ENCODE measurements at regions of chr14 and their contacts with region 1.

Region 1: DNA sequence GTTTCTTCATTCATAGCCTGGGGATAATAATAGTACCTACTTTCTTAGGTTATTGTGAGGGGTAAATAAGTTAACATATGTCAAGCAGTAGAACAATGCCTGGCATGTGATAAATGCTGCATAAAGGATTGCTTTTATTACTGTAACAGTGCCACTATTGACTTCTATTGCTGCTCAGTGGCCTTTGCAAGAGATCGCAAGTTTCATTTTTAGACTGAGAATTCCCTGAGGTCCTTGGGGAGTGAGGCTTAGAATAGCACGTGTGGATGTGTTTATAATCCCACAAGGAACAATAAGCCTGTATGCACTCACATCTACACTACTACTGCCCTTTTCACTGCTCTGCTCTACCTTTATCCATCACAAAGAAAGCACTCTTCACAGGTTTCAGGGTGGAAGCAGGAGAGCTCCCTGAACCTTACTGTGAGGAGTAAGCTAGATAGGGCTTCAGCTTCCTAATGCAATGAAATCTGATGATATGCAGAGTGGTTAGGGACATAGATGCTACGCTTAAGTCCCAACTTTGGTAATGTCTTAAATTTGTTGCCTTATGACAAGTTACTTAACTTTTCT is 302.6 kb downstream of the SNAPC1 start:
- DNase-seq: no peak
- ATAC-seq: no peak
- H3K4me3 ChIP-seq: no peak overlapping the region
- H3K27ac ChIP-seq: no peak overlapping the region
- H3K4me1 ChIP-seq: no peaks in the 10 kb centered on the region
- H3K27me3 ChIP-seq: no peaks in the 10 kb centered on the region
- CTCF ChIP-seq: no peak

Region 2: DNA sequence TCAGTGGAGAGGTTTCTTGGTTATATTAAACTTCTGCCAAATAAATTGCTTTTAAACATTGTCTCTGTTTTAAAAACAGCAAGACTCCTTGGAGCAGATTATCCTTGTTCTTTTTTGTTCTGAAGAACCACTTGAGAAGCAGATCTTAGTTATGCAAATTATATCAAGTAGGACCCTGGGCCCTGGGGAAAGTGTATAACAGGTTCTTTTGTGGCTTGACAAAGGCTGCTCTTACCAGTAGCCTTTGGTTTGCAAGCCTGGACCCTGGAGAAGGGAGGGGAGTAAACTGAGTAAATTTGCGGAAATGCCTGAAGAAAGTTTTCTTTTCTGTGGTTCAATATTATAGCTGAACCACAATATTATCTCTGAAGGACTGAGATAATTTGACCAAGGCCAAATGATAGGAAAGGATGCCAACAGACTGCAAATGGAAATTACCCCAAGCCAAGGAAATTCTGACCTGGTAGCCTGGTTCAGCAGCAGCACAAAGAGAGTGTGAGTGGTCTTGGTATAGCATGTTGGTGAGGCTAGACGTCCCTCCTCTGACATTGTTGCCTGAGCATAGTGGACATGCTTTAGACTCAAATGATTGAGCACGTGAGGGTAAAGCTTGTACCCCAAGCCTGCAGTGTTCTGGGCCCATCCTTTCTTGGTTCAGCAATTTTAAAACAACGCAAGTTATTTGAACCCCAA is 1385.1 kb before region 1 on chr14:
- CTCF ChIA-PET with region 1: no interaction called
- POLR2A ChIA-PET with region 1: no interaction called
- intact Hi-C with region 1: no loop called
- DNase-seq: no peak
- ATAC-seq: no peak
- H3K4me3 ChIP-seq: no peak overlapping the region
- H3K27ac ChIP-seq: no peak overlapping the region
- H3K4me1 ChIP-seq: no peaks in the 10 kb centered on the region
- H3K27me3 ChIP-seq: no peaks in the 10 kb centered on the region
- CTCF ChIP-seq: no peak

Region 3: GRCh38 chr14:61948406-61948805 is 116.4 kb before region 1 on chr14:
- CTCF ChIA-PET with region 1: no interaction called
- POLR2A ChIA-PET with region 1: interaction called, 14 read pairs
- intact Hi-C with region 1: no loop called
- DNase-seq: no peak
- ATAC-seq: no peak
- H3K4me3 ChIP-seq: no peak overlapping the region
- H3K27ac ChIP-seq: no peak overlapping the region
- H3K4me1 ChIP-seq: no peaks in the 10 kb centered on the region
- H3K27me3 ChIP-seq: no peaks in the 10 kb centered on the region
- CTCF ChIP-seq: no peak

Measured in PC-3 (cell line).